Endothelial cell of umbilical vein (primary cell): ENCODE measurements at regions of chr13 and their contacts with region 1.

Region 1: DNA sequence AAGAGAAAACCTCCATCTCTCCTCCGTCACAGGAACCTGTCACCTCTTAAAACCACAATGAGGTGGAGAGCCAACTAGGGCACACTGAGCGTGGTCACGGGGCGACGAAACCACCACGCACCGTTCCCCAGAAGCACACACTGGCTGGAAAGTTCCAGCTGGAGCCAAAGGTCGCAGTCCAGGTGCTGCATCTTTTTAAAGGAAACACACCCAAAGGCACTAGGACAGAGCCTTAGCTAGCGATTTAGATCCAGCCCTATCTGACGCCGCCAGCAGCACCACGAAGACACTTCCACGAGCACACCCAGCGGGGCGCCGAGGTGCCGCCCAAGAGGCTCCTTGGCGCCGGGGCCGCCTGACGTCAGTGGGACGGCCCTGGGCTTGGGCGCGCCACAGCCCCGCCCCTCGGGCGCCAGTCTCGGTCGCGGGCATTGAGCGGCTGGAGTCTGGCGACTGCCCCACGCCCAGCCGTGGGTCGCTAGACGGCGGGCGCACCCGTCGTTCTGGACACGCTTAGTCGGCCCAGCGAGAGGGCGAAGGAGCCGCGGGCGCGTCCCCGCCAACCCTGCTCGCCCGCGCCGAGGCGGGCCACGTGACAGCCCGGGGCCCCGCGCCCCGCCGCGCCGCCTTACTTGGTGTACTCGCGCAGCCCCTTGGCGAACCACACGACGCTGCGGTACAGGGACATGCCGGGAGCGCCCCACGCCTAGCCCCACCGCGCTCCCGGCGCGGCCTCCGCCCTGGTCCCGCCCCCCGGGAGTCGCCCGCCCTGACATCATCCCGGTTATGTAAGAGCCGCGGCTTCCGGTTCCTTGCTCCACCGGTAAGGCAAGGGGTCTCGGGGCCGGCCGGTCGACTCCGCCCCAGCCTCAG is at the start of gene DHRS12:
- DNase-seq: peak; percentile 75
- H3K4me3 ChIP-seq: peak within 1 kb of the TSS; percentile 62 to 72 (median 71)
- H3K27ac ChIP-seq: peak within 1 kb of the TSS; percentile 92
- H3K4me1 ChIP-seq: peaks cover 35% of the 10 kb centered on the region
- H3K27me3 ChIP-seq: no peaks in the 10 kb centered on the region
- CTCF ChIP-seq: no peak
- POLR2A ChIP-seq: peak; percentile 77
- total RNA-seq, gene DHRS12: 6.4 and 8.9 TPM in 2 replicates

Region 2: GRCh38 chr13:51645154-51645650 is 158.5 kb before region 1 on chr13:
- CTCF ChIA-PET with region 1: no interaction called
- POLR2A ChIA-PET with region 1: no interaction called
- dilution Hi-C with region 1: no loop called
- intact Hi-C with region 1: loop called (anchors 5 kb)
- DNase-seq: no peak
- H3K4me3 ChIP-seq: no peak overlapping the region
- H3K27ac ChIP-seq: peak overlapping the region; percentile 87
- H3K4me1 ChIP-seq: peaks cover 28% of the 10 kb centered on the region
- H3K27me3 ChIP-seq: no peaks in the 10 kb centered on the region
- CTCF ChIP-seq: no peak
- POLR2A ChIP-seq: no peak

Region 3: DNA sequence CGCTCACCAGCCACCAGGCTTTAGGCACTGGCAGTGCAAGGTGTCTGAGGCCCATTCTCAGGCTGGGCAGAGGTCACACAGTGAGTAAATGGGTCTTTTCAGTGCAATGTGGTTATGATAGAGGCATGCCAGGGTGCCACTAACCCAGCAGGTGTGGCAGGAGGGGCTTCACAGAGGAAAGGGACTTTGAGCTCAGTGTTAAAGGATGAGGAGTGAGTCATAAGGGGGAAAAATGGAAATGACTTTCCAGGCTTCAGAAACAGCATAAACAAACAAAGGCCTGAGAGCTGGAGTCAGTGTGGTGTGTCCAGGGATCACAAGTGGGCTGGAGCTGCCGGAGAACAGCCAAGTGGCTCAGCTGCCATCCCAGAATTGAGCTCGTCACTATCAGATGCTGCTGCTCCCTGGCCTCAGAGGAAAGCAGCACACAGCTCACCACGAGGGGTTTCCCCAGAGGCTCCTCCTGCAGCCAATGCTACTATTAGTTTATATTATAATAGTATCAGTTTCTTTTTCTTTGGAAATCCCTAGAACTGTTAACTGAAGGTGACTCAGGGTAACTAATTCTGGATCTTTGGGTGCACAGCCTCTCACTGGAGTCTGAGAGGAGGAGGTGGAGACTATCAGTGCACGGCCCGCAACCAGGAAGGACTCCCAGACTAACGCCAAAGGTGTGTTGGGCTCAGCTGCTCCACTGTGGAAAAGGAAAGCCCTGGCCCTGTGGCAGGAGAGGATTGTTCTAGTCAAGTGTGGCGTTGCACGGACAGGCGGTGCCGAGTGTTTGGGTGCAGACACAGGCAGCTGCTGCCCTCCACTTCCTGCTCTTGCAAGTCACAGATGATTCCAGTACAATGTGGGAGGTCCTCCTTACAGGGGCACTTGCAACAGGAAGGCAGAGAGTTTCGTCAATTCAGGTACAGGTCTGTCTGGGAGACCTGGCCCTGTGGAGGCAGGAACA is 39.2 kb before region 1 on chr13:
- CTCF ChIA-PET with region 1: no interaction called
- POLR2A ChIA-PET with region 1: no interaction called
- dilution Hi-C with region 1: no loop called
- intact Hi-C with region 1: loop called (anchors 2 kb)
- DNase-seq: peak; percentile 78
- H3K4me3 ChIP-seq: no peak overlapping the region
- H3K27ac ChIP-seq: no peak overlapping the region
- H3K4me1 ChIP-seq: peaks cover 11% of the 10 kb centered on the region
- H3K27me3 ChIP-seq: no peaks in the 10 kb centered on the region
- CTCF ChIP-seq: no peak
- POLR2A ChIP-seq: no peak

Region 4: DNA sequence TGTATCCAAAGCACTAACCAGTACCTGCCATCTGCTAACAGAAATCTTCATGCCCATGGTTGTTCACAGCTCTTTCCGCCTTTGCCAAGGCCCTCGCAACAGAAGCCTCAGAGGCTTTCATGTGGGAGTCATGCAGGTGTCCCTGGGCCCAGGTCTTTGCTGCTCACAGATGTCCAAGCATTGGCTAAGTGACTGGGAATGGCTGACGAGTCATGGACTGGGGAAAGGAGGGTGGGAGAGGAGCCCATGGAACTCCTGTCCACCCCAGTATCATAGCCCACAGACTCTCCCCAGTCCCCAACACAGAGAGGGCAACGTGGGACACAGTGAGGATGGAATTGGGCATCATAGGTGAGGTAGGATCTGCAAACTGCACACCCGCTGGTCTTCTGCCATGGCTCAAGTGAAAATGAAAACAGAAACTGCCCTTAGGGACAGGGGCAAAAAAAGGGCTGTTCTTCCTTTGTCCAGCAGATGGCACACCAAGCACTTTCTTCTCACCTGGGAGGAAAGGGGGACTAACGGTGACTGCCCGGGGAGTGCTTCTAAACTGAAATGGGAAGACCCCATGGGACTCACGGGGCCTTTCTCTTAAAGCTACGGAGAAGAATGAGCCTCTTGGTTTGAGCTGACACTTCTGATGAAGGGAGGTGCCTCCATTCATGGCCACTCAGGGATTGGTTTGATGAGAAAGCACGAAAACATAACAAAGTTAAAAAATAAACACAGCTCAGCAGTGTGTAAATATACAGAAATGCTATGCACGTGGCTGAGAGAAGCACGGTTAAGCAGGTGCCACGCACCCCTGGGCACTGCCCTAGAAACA is 11.4 kb after region 1 on chr13:
- CTCF ChIA-PET with region 1: interaction called, 12 read pairs
- POLR2A ChIA-PET with region 1: no interaction called
- dilution Hi-C with region 1: no loop called
- intact Hi-C with region 1: no loop called
- DNase-seq: peak; percentile 63
- H3K4me3 ChIP-seq: peak overlapping the region in 1 of 3 experiments; percentile 23
- H3K27ac ChIP-seq: no peak overlapping the region
- H3K4me1 ChIP-seq: peaks cover 6% of the 10 kb centered on the region
- H3K27me3 ChIP-seq: peaks cover 9 to 22% of the 10 kb centered on the region in 2 experiments
- CTCF ChIP-seq: peak; percentile 74 to 82
- POLR2A ChIP-seq: no peak